Naive thymus-derived CD8-positive, alpha-beta T cell (primary cell): ENCODE measurements at regions of chr2 and their contacts with region 1.

Region 1: GRCh38 chr2:28594289-28595108 is 98.6 kb downstream of the PLB1 start:
- DNase-seq: peak; percentile 70 to 92 (median 81)
- ATAC-seq: peak; percentile 81 to 83
- H3K4me3 Mint-ChIP-seq: peak overlapping the region; percentile 31 to 81 (median 71)
- H3K27ac Mint-ChIP-seq: peak overlapping the region; percentile 77 to 97 (median 93)
- H3K4me1 Mint-ChIP-seq: peaks cover 13 to 22% (median 17%) of the 10 kb centered on the region in 4 donors
- H3K27me3 Mint-ChIP-seq: peaks cover 0 to 16% (median 3%) of the 10 kb centered on the region in 5 donors

Region 2: DNA sequence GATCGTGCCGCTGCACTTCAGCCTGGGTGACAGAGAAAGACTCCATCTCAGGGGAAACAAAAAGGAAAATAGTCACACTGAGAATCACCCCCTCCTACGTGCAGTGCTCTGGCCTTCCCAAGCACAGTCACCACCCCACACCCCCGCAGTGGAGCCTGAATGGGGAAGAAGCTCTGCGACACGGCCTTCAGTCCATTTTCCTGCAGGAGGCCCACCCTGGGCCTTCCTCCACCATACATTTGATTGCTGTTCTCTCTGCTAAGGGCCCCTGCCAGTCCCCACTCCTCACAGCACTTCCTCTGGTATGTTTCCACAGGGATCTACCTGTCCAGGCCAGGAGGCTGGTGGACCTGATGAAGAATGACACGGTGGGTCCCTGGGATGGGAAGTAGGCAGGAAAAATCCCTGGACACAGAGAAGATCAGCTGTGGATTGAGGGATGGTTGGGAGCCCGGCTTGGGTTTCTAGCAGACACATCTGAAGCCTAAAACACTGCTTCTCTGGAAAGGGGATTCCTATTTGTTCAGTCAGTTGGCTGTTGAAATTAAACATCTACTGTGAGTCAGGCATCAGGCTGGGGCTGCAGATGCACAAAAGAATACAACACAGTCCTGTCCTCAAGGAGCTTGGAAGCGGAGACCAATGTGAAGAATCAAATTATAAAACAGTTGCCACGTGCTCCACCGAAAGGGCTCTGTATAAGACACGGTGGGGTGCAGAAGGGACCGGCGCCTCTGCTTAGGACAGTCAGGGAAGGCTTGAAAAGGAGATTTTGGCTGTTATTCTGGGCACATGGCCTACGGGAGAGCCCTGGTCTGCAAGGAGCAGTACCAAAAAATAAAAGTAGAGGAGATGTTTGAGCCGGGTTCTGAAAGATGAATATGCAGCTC is 16.5 kb before region 1 on chr2:
- POLR2A ChIA-PET with region 1: no interaction called
- DNase-seq: no peak
- ATAC-seq: no peak
- H3K4me3 Mint-ChIP-seq: no peak overlapping the region
- H3K27ac Mint-ChIP-seq: no peak overlapping the region
- H3K4me1 Mint-ChIP-seq: peaks cover 0 to 2% (median 0%) of the 10 kb centered on the region in 4 donors
- H3K27me3 Mint-ChIP-seq: no peaks in the 10 kb centered on the region

Region 3: DNA sequence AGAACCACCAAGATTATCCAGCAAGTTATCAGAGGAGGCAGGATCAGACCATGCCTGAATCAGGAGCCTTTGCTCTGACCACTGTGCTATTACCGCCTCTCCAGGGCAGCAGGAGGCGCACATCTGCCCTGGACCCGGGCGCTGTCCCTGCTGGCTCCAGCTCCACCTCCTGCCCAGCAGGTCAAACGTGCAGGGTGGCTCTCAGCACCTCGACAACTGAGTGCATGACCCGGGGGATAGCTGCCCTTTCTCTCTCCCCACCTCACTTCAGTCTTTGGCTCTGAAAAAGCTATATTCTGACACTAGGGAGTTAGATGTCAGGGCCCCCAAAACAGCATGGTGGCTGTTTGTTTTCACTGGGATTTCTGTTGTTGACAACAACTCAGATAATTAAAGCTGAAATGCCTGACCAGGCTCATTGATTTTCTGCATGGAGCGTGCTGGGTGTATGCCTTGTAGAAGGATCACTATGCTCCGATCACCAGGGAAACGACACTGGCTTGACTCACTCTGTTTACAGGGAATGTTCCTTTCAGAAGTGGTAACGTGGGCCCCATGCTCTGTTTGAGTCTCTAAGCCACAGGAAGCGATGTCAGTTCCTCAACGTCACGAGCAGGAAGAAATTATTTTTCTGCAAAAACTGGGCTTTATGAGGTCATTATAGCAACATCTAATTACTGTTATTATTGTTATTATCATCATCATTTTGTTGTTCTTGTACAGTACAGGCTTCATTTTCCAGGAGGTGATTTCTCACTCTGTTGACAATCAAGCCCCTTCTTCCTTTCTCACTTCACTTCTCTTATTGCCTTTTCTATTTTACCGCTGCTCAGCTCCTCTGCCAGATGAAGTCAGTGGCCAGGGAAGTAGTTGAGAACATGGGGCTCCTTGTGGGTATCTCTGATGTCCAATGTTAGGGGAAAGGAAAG is 26.9 kb after region 1 on chr2:
- POLR2A ChIA-PET with region 1: interaction called, 18 read pairs
- DNase-seq: peak; percentile 44 to 95 (median 88)
- ATAC-seq: peak; percentile 85 to 88
- H3K4me3 Mint-ChIP-seq: peak overlapping the region; percentile 67 to 87 (median 80)
- H3K27ac Mint-ChIP-seq: peak overlapping the region; percentile 91 to 100 (median 98)
- H3K4me1 Mint-ChIP-seq: peaks cover 55 to 94% (median 88%) of the 10 kb centered on the region in 4 donors
- H3K27me3 Mint-ChIP-seq: no peaks in the 10 kb centered on the region